Activated T-helper 2 cell treated with anti-CD3 and anti-CD28 coated beads, Interferon-gamma antibody, Interleukin-2, Interleukin-4, amounts not matched to agents 10 μg/mL and 5 μg/mL and 100 μg/mL, durations not matched to agents 14 hours and 24 hours and 36 hours (primary cell): ENCODE measurements at regions of chr7 and their contacts with region 1.

Region 1: GRCh38 chr7:92768501-92769393 is 67.6 kb downstream of the CDK6 start:
- DNase-seq: no peak
- H3K4me3 Mint-ChIP-seq: peak overlapping the region; percentile 11
- H3K27ac Mint-ChIP-seq: peak overlapping the region; percentile 83
- H3K4me1 Mint-ChIP-seq: peaks cover 64% of the 10 kb centered on the region
- H3K27me3 Mint-ChIP-seq: no peaks in the 10 kb centered on the region

Region 2: DNA sequence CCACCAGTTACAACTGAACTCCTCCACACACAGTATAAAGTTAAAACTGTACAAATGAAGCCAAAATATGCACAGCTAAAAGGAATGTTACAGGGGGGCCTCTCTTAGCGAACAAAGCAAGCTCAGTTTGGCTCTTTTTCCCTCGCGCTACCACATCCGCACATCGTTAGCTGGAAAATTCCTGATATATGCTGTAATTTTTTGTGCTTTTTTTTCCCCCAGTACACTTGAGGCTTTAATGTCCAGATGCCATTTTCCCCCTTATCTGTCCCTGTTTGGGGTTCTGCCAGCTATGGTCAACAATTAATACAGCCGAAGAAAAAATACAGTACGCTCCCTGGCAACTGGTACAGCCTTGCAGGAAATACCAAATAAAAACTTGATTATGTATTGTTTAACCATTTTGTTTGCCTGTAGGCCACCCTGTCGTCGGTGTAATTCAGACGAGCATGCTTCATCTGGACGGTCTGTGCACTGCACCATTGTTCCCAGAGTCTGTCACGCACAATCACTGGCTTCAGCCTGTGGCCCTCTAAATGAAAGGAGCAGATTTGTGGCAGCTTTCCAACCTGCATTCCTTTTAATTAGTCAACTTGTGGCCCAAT is 70.4 kb before region 1 on chr7:
- intact Hi-C with region 1: no loop called
- DNase-seq: no peak
- H3K4me3 Mint-ChIP-seq: no peak overlapping the region
- H3K27ac Mint-ChIP-seq: no peak overlapping the region
- H3K4me1 Mint-ChIP-seq: peaks cover 27% of the 10 kb centered on the region
- H3K27me3 Mint-ChIP-seq: no peaks in the 10 kb centered on the region

Region 3: DNA sequence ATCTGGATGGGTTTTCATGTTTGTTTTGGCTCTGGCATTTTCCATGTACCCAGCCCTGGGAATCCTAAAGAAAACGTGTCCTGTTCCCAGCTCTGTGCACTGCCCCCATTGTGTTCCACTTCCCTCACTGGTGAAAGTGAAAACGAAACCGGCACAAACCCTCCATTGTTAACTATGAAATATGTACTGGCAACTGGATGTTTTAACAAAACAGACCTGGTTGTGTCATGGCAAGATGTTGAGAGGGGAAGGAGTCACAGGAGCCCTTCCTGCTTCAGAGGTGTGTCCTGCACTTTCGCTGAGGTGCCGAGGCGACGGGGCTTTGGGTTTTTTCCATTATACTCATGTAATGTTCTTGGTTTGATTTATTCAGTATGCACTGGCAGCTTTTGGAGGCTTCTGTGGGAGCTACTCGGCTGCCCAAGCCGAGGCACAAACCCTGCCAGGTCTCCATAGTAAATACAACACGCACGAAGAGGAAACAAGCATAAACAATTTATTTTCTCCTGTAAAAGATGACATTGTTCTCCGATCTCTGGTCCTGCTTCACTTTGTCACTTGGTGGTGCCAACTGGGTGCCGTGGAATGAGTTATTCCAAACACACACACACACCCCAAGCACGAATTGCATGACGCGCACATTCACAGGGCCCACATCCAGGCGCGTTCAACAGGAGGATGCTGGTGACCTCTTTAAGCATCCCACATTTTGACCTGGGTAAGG is 50.6 kb before region 1 on chr7:
- intact Hi-C with region 1: loop called (anchors 2 kb)
- DNase-seq: peak; percentile 71
- H3K4me3 Mint-ChIP-seq: peak overlapping the region; percentile 80
- H3K27ac Mint-ChIP-seq: peak overlapping the region; percentile 97
- H3K4me1 Mint-ChIP-seq: peaks cover 66% of the 10 kb centered on the region
- H3K27me3 Mint-ChIP-seq: no peaks in the 10 kb centered on the region

Region 4: GRCh38 chr7:92751902-92752901 is 16.5 kb before region 1 on chr7:
- intact Hi-C with region 1: loop called (anchors 1 kb)
- DNase-seq: no peak
- H3K4me3 Mint-ChIP-seq: no peak overlapping the region
- H3K27ac Mint-ChIP-seq: peak overlapping the region; percentile 76
- H3K4me1 Mint-ChIP-seq: peaks cover 62% of the 10 kb centered on the region
- H3K27me3 Mint-ChIP-seq: no peaks in the 10 kb centered on the region

Region 5: DNA sequence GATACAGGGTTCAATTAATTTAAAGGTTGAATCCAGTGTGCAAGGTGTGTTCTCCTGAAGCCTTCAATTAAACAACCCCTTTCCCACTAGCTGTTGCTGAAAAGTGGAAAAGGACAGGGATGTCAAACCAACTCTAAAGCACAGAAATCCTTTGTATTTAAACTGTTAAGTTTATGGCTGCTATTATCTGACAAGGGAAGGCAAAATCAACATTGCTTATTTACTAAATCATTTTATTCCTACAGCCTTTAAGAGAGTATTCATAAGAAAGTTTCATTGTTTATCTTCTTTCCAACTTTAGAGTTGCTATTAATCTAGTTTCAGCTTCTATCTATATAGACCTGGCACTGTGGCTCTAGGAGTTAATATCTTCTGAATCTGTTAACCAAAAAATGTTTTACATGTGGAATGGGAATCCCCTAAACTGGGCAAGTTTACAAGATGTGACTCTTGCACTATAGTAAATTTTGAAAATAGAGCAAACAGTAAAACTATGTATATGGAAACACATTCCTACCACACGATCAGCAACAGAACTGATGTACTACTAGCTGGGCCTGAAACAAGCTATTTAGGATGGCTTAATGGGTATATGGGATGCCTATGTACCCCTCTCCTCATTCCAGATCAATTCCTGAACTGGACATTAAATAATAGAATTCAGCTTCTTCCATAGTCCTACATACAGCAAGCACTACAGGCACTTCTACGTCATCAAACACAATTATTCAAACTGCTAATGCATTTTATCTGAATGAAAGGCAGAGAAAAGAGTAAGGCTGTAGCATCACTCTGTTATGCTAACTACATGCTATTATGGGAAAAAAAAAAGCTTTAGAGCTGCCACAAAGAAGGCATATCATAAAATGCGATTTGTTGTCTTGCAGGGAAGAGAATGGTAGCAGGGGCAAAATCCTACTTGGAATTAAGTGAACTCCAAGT is 14.8 kb after region 1 on chr7:
- intact Hi-C with region 1: loop called (anchors 2 kb)
- DNase-seq: no peak
- H3K4me3 Mint-ChIP-seq: no peak overlapping the region
- H3K27ac Mint-ChIP-seq: peak overlapping the region; percentile 39
- H3K4me1 Mint-ChIP-seq: peaks cover 58% of the 10 kb centered on the region
- H3K27me3 Mint-ChIP-seq: no peaks in the 10 kb centered on the region

Region 6: DNA sequence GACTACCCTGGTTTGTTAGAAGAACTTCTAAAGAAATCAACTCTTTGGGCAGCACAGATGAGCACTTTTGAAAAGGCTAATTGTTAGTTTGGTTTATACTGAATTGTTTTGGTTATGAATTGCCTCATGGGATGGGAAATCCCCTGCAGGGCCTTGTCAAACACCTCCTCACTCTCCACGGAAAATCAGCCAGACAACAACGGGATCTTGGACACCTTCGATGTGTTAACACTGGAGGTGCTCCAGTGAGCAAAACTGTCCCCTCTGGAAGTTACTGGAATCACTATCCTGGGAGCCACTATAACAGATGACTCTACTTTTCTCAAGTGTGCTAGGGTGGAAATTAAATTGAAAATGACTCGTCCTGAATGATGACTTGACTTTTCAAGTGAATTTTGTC is 28.9 kb after region 1 on chr7:
- intact Hi-C with region 1: loop called (anchors 1 kb)
- DNase-seq: no peak
- H3K4me3 Mint-ChIP-seq: no peak overlapping the region
- H3K27ac Mint-ChIP-seq: no peak overlapping the region
- H3K4me1 Mint-ChIP-seq: peaks cover 36% of the 10 kb centered on the region
- H3K27me3 Mint-ChIP-seq: no peaks in the 10 kb centered on the region